ENCODE measurements at regions of chr22 and their contacts with region 1.

Region 1: DNA sequence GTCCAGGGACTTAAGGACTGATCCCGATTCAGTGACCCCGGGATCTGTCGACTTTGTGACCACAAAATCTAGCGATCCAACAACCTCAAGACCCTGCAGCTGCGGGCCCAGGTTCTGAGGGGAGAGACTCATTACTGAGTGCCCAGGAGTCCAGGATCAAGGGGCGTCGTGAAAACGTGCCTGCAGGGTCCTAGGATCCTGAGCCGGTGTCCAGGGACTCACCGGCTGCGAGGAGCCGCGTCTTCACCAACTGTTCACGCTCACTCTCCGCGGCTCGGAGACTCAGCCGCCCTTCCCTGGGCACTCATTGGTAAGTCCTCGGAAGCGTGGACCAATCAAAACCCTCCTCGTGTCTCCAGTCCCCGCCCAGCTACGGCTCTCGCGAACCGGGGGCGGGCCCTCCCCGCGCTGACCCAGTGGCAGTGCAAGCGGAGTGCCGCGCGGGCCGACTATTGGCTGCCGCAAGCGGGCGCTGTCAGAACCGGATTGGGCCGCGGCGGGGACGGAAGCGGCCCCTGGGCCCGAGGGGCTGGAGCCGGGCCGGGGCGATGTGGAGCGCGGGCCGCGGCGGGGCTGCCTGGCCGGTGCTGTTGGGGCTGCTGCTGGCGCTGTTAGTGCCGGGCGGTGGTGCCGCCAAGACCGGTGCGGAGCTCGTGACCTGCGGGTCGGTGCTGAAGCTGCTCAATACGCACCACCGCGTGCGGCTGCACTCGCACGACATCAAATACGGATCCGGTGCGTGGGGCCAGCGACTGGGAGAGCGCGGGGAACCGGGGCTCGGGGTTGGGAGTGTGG is at the start of gene SDF2L1:
- DNase-seq: peak; percentile 97 to 99 (median 98)
- ATAC-seq: peak; percentile 96
- H3K4me3 ChIP-seq: peak within 1 kb of the TSS; percentile 74 to 88
- H3K4me3 Mint-ChIP-seq: peak within 1 kb of the TSS; percentile 82
- H3K27ac ChIP-seq: peak within 1 kb of the TSS; percentile 79 to 80
- H3K27ac Mint-ChIP-seq: peak within 1 kb of the TSS; percentile 88
- H3K4me1 ChIP-seq: peaks cover 28% of the 10 kb centered on the region
- H3K4me1 Mint-ChIP-seq: peaks cover 32% of the 10 kb centered on the region
- H3K27me3 ChIP-seq: no peaks in the 10 kb centered on the region
- H3K27me3 Mint-ChIP-seq: no peaks in the 10 kb centered on the region
- CTCF ChIP-seq: no peak
- total RNA-seq, gene SDF2L1: 20.8 to 21.5 TPM

Region 2: DNA sequence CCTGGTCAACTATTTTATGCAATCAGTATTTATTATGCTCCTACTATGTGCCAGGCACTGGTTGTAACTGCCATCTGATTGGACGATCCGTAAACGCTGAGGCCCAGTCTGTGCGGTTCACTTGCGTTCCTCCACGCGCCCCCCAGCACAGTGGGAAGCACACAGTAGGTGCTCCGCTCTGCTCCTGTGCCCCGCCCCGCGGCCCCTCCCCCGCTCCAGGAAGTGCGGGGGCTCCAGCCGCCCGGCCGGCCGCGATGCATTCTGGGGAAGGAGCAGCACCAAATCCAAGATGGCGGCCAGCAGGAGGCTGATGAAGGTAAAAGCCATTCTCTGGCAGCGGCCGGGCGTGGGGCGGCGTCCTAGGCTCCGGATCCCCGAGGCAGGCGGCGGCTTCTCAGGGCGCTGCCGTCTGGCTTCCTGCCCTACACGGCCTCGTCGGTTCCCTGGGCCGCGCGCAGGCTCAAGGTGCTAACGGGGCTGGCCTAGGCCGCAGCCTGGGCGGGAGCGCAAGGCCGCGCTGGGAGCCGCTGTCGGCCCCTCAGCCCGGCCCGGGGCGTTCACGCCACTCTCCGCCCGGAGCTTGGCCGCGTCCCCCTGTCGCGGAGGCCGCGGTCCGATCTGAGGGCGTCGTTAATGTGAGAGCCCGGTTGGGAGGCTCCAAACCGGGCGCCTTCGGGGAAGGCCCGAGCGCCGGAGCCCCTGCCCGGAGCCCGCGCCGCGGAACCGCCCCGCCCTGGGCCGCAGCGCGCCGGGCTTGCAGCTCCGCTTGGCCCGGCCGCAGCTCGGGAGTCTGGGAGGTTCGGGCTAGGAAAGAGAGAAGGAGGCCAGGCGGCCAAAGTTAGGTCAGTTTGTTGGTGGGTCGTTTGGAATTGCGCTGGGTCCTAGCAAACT is 74.3 kb before region 1 on chr22 and contains the start of gene UBE2L3:
- CTCF ChIA-PET with region 1: interaction called, 3 read pairs
- POLR2A ChIA-PET with region 1: no interaction called
- intact Hi-C with region 1: loop called (anchors 2 kb)
- DNase-seq: peak; percentile 64 to 91 (median 83)
- ATAC-seq: peak; percentile 88
- H3K4me3 ChIP-seq: peak within 1 kb of the TSS; percentile 71 to 79
- H3K4me3 Mint-ChIP-seq: peak within 1 kb of the TSS; percentile 87
- H3K27ac ChIP-seq: peak within 1 kb of the TSS; percentile 88 to 90
- H3K27ac Mint-ChIP-seq: peak within 1 kb of the TSS; percentile 94
- H3K4me1 ChIP-seq: peaks cover 43% of the 10 kb centered on the region
- H3K4me1 Mint-ChIP-seq: peaks cover 40% of the 10 kb centered on the region
- H3K27me3 ChIP-seq: no peaks in the 10 kb centered on the region
- H3K27me3 Mint-ChIP-seq: no peaks in the 10 kb centered on the region
- CTCF ChIP-seq: no peak
- total RNA-seq, gene UBE2L3: 20.7 to 22.4 TPM

Region 3: DNA sequence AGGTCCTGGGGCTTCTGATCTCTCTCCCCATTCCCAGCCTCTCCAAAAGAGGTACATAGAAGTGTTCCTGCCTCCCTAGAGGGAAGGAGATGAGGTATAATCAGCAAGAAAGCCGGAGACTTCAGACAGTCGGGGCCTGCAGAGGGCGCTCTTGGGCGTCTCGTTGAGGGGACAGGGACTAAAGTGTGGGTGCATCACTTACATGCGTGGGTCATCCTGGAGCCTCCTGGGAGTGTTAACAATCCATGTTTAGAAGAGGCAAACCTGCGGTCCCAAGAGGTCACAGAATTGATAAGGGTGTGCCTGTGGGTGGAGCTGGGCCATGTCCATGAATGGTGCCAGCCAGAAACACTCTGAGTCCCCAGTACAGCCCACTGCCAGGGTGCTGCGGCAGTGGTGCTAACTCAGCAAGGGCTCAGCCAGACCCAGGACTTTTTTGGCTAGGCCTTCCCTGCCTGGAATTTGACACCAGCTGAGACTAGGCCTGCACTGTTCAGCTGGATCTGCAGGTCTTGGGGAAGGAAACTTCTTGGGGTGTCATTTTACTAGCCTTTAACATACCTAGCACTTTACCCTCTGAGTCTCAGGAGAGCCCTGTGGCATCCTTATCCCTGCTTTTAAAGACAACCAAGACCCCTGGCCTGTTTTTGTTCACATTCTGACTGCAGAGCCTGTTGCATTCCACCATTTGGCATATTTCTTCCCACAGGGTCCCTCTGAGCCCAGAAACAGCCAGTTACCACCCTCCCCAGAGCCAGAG is 17.7 kb before region 1 on chr22:
- CTCF ChIA-PET with region 1: interaction called, 83 read pairs
- POLR2A ChIA-PET with region 1: interaction called, 62 read pairs
- intact Hi-C with region 1: no loop called
- DNase-seq: peak in 5 of 9 experiments; percentile 44 to 54 (median 48)
- ATAC-seq: peak; percentile 26
- H3K4me3 ChIP-seq: no peak overlapping the region
- H3K4me3 Mint-ChIP-seq: no peak overlapping the region
- H3K27ac ChIP-seq: no peak overlapping the region
- H3K27ac Mint-ChIP-seq: peak overlapping the region; percentile 47
- H3K4me1 ChIP-seq: peaks cover 37% of the 10 kb centered on the region
- H3K4me1 Mint-ChIP-seq: peaks cover 40% of the 10 kb centered on the region
- H3K27me3 ChIP-seq: no peaks in the 10 kb centered on the region
- H3K27me3 Mint-ChIP-seq: no peaks in the 10 kb centered on the region
- CTCF ChIP-seq: peak; percentile 55

Region 4: GRCh38 chr22:21652010-21652546 is 10.1 kb after region 1 on chr22:
- CTCF ChIA-PET with region 1: interaction called, 20 read pairs
- POLR2A ChIA-PET with region 1: interaction called, 5 read pairs
- intact Hi-C with region 1: loop called in 1 of 2 experiments (anchors 1 kb)
- DNase-seq: peak; percentile 28 to 88 (median 80)
- ATAC-seq: peak; percentile 97
- H3K4me3 ChIP-seq: peak overlapping the region; percentile 57 to 65
- H3K4me3 Mint-ChIP-seq: peak overlapping the region; percentile 84
- H3K27ac ChIP-seq: no peak overlapping the region
- H3K27ac Mint-ChIP-seq: no peak overlapping the region
- H3K4me1 ChIP-seq: peaks cover 26% of the 10 kb centered on the region
- H3K4me1 Mint-ChIP-seq: peaks cover 23% of the 10 kb centered on the region
- H3K27me3 ChIP-seq: no peaks in the 10 kb centered on the region
- H3K27me3 Mint-ChIP-seq: no peaks in the 10 kb centered on the region
- CTCF ChIP-seq: no peak

Measured in CD8-positive, alpha-beta T cell (primary cell).